ENCODE measurements at regions of chr18 and their contacts with region 1.

Region 1: GRCh38 chr18:57621246-57621604 is 411 bp downstream of the NARS1 start:
- DNase-seq: no peak
- ATAC-seq: peak; percentile 17
- H3K4me3 Mint-ChIP-seq: peak overlapping the region; percentile 100
- H3K27ac Mint-ChIP-seq: peak overlapping the region; percentile 100
- H3K4me1 Mint-ChIP-seq: peaks cover 19% of the 10 kb centered on the region
- H3K27me3 Mint-ChIP-seq: no peaks in the 10 kb centered on the region

Region 2: GRCh38 chr18:57505231-57505630 is 116.0 kb before region 1 on chr18:
- POLR2A ChIA-PET with region 1: no interaction called
- DNase-seq: no peak
- ATAC-seq: no peak
- H3K4me3 Mint-ChIP-seq: no peak overlapping the region
- H3K27ac Mint-ChIP-seq: no peak overlapping the region
- H3K4me1 Mint-ChIP-seq: no peaks in the 10 kb centered on the region
- H3K27me3 Mint-ChIP-seq: peaks cover 25% of the 10 kb centered on the region

Region 3: DNA sequence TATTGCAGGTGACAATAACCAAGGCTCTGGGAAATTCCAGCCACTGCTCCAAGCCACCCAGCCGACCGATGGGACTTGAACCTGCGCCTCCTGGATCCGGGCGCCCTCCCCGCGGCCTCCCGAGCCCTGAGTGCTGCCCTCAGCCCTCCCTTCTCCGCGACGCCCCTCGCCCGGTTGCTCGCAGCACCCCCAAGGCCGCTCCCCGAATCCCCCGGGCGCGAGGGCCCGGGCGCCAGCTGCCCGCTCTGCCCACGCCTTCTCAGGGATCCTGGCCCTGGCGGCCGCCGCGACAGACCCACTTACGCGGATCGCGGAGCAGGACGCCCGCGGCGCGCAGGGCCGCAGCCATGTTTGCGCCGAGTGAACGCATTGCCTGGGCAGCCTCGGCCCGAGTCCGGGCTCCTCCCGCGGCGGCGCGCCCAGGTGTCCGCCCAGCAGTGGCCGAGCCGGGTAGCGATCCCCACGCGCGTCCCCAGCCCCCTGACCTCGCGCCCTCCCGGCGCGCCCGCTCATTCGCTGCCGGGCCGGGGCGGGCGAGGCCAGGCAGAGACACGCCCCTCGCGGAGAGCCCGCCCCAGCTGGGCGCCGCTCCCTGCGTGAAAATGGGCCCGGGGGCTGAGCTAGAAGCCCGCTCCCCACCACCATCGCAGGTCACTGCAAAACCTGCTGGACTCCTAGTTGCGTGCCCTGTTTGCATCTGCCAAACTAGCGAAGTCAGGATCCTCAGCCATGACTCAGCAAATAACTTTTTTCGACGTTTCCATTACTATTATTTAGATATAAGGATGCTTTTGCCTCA is 34.8 kb before region 1 on chr18 and contains the start of gene FECH:
- POLR2A ChIA-PET with region 1: interaction called, 11 read pairs
- DNase-seq: peak; percentile 84
- ATAC-seq: peak; percentile 96
- H3K4me3 Mint-ChIP-seq: peak within 1 kb of the TSS; percentile 89
- H3K27ac Mint-ChIP-seq: peak within 1 kb of the TSS; percentile 85
- H3K4me1 Mint-ChIP-seq: peaks cover 15% of the 10 kb centered on the region
- H3K27me3 Mint-ChIP-seq: no peaks in the 10 kb centered on the region
- total RNA-seq, gene FECH: 23.2 to 23.6 TPM